CD8-positive, alpha-beta memory T cell (primary cell): ENCODE measurements at regions of chr3 and their contacts with region 1.

Region 1: GRCh38 chr3:101573449-101574387 is at the start of gene PCNP:
- DNase-seq: peak; percentile 98 to 99 (median 98)
- H3K4me3 ChIP-seq: peak within 1 kb of the TSS; percentile 96
- H3K4me3 Mint-ChIP-seq: peak within 1 kb of the TSS; percentile 94 to 100 (median 96)
- H3K27ac ChIP-seq: peak within 1 kb of the TSS; percentile 99
- H3K27ac Mint-ChIP-seq: peak within 1 kb of the TSS; percentile 97 to 99 (median 99)
- H3K4me1 ChIP-seq: peaks cover 56% of the 10 kb centered on the region
- H3K4me1 Mint-ChIP-seq: peaks cover 57 to 71% (median 68%) of the 10 kb centered on the region in 3 donors
- H3K27me3 ChIP-seq: no peaks in the 10 kb centered on the region
- H3K27me3 Mint-ChIP-seq: peaks cover 0 to 4% of the 10 kb centered on the region in 2 donors
- total RNA-seq, gene PCNP: 205 to 216 TPM

Region 2: DNA sequence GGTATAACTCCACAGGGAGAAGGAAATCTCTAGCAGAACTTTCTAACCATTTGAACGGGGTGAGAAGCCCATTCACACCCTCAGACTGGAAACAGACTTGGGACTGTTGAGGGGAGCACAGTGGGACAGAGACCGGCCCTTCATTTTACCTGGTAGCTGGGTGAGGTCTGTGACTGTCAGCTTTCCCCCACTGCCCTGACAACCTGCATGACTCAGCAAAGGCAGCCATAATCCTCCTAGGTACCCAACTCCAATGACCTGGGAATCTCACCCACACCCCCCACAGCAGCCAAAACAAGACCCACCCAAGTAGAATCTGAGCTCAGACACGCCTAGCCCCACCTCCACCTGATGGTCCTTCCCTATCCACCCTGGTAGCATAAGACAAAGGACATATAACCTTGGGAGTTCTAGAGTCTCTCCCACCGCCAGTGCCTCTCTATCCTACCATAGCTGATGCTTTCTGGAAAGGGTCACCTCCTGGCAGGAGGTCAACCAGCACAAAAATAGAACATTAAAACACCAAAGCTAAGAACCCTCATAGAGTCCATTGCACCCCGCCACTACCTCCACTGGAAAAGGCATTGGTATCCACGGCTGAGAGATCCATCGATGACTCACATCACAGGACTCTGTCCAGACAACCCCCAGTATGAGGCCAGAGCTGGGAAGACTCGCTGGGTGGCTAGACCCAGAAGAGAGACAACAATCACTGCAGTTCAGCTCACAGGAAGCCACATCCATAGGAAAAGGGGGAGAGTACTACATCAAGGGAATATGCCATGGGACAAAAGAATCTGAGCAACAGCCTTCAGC is 88.7 kb before region 1 on chr3:
- CTCF ChIA-PET with region 1: no interaction called
- POLR2A ChIA-PET with region 1: no interaction called
- DNase-seq: no peak
- H3K4me3 ChIP-seq: no peak overlapping the region
- H3K4me3 Mint-ChIP-seq: no peak overlapping the region
- H3K27ac ChIP-seq: no peak overlapping the region
- H3K27ac Mint-ChIP-seq: peak overlapping the region in 6 of 8 donors; percentile 3 to 88 (median 66)
- H3K4me1 ChIP-seq: peaks cover 9% of the 10 kb centered on the region
- H3K4me1 Mint-ChIP-seq: peaks cover 68 to 91% (median 91%) of the 10 kb centered on the region in 3 donors
- H3K27me3 ChIP-seq: no peaks in the 10 kb centered on the region
- H3K27me3 Mint-ChIP-seq: no peaks in the 10 kb centered on the region

Region 3: GRCh38 chr3:101518421-101518871 is 55.3 kb before region 1 on chr3:
- CTCF ChIA-PET with region 1: interaction called, 5 read pairs
- POLR2A ChIA-PET with region 1: interaction called, 13 read pairs
- DNase-seq: peak in 4 of 5 donors; percentile 32 to 77 (median 60)
- H3K4me3 ChIP-seq: peak overlapping the region; percentile 35
- H3K4me3 Mint-ChIP-seq: peak overlapping the region; percentile 6 to 75 (median 57)
- H3K27ac ChIP-seq: peak overlapping the region; percentile 58
- H3K27ac Mint-ChIP-seq: peak overlapping the region; percentile 91 to 99 (median 97)
- H3K4me1 ChIP-seq: peaks cover 62% of the 10 kb centered on the region
- H3K4me1 Mint-ChIP-seq: peaks cover 39 to 62% (median 57%) of the 10 kb centered on the region in 3 donors
- H3K27me3 ChIP-seq: no peaks in the 10 kb centered on the region
- H3K27me3 Mint-ChIP-seq: peaks cover 0 to under 1% of the 10 kb centered on the region in 2 donors

Region 4: GRCh38 chr3:101561630-101562328 is 11.9 kb before region 1 on chr3 and contains the start of gene TRMT10C:
- CTCF ChIA-PET with region 1: interaction called, 11 read pairs
- POLR2A ChIA-PET with region 1: interaction called, 25 read pairs
- DNase-seq: peak; percentile 86 to 95 (median 89)
- H3K4me3 ChIP-seq: peak within 1 kb of the TSS; percentile 98
- H3K4me3 Mint-ChIP-seq: peak within 1 kb of the TSS; percentile 96 to 100 (median 99)
- H3K27ac ChIP-seq: peak within 1 kb of the TSS; percentile 88
- H3K27ac Mint-ChIP-seq: peak within 1 kb of the TSS; percentile 93 to 99 (median 99)
- H3K4me1 ChIP-seq: peaks cover 17% of the 10 kb centered on the region
- H3K4me1 Mint-ChIP-seq: peaks cover 25 to 45% (median 33%) of the 10 kb centered on the region in 3 donors
- H3K27me3 ChIP-seq: no peaks in the 10 kb centered on the region
- H3K27me3 Mint-ChIP-seq: peaks cover 0 to 7% of the 10 kb centered on the region in 2 donors
- total RNA-seq, gene TRMT10C: 57.4 to 59.3 TPM

Region 5: GRCh38 chr3:101602731-101603130 is 29.0 kb after region 1 on chr3:
- CTCF ChIA-PET with region 1: no interaction called
- POLR2A ChIA-PET with region 1: no interaction called
- DNase-seq: no peak
- H3K4me3 ChIP-seq: no peak overlapping the region
- H3K4me3 Mint-ChIP-seq: no peak overlapping the region
- H3K27ac ChIP-seq: no peak overlapping the region
- H3K27ac Mint-ChIP-seq: peak overlapping the region in 2 of 8 donors; percentile 36 to 68
- H3K4me1 ChIP-seq: no peaks in the 10 kb centered on the region
- H3K4me1 Mint-ChIP-seq: peaks cover 0 to 3% (median 2%) of the 10 kb centered on the region in 3 donors
- H3K27me3 ChIP-seq: no peaks in the 10 kb centered on the region
- H3K27me3 Mint-ChIP-seq: no peaks in the 10 kb centered on the region

Region 6: GRCh38 chr3:101676765-101677435 is 103.2 kb after region 1 on chr3 and contains the start of gene ZBTB11:
- CTCF ChIA-PET with region 1: interaction called, 23 read pairs
- POLR2A ChIA-PET with region 1: interaction called, 31 read pairs
- DNase-seq: peak; percentile 99 to 100 (median 99)
- H3K4me3 ChIP-seq: peak within 1 kb of the TSS; percentile 90
- H3K4me3 Mint-ChIP-seq: peak within 1 kb of the TSS; percentile 95 to 98 (median 96)
- H3K27ac ChIP-seq: peak within 1 kb of the TSS; percentile 99
- H3K27ac Mint-ChIP-seq: peak within 1 kb of the TSS; percentile 96 to 100 (median 98)
- H3K4me1 ChIP-seq: peaks cover 26% of the 10 kb centered on the region
- H3K4me1 Mint-ChIP-seq: peaks cover 41 to 67% (median 57%) of the 10 kb centered on the region in 3 donors
- H3K27me3 ChIP-seq: no peaks in the 10 kb centered on the region
- H3K27me3 Mint-ChIP-seq: peaks cover 0 to 3% of the 10 kb centered on the region in 2 donors
- total RNA-seq, gene ZBTB11: 28.9 to 29.7 TPM

Region 7: GRCh38 chr3:101685870-101686412 is 112.2 kb after region 1 on chr3:
- CTCF ChIA-PET with region 1: interaction called, 7 read pairs
- POLR2A ChIA-PET with region 1: interaction called, 13 read pairs
- DNase-seq: no peak
- H3K4me3 ChIP-seq: peak overlapping the region; percentile 94
- H3K4me3 Mint-ChIP-seq: peak overlapping the region; percentile 98 to 100 (median 100)
- H3K27ac ChIP-seq: peak overlapping the region; percentile 95
- H3K27ac Mint-ChIP-seq: peak overlapping the region; percentile 96 to 100 (median 99)
- H3K4me1 ChIP-seq: peaks cover 34% of the 10 kb centered on the region
- H3K4me1 Mint-ChIP-seq: peaks cover 34 to 56% (median 47%) of the 10 kb centered on the region in 3 donors
- H3K27me3 ChIP-seq: no peaks in the 10 kb centered on the region
- H3K27me3 Mint-ChIP-seq: no peaks in the 10 kb centered on the region